Natural killer cell (primary cell): ENCODE measurements at regions of chr12 and their contacts with region 1.

Region 1: GRCh38 chr12:120580787-120581723 is at the start of gene POP5:
- DNase-seq: peak; percentile 90 to 98
- ATAC-seq: peak; percentile 92 to 98 (median 96)
- H3K4me3 ChIP-seq: peak within 1 kb of the TSS; percentile 86
- H3K4me3 Mint-ChIP-seq: peak within 1 kb of the TSS; percentile 93
- H3K27ac ChIP-seq: peak within 1 kb of the TSS; percentile 44
- H3K27ac Mint-ChIP-seq: peak within 1 kb of the TSS; percentile 88 to 94
- H3K4me1 ChIP-seq: peaks cover 32% of the 10 kb centered on the region
- H3K4me1 Mint-ChIP-seq: peaks cover 30 to 36% of the 10 kb centered on the region in 2 donors
- H3K27me3 ChIP-seq: peaks cover 3% of the 10 kb centered on the region
- H3K27me3 Mint-ChIP-seq: peaks cover 4 to 12% of the 10 kb centered on the region in 2 donors
- CTCF ChIP-seq: no peak
- total RNA-seq, gene POP5: 38.7 to 54.3 (median 42.9) TPM

Region 2: GRCh38 chr12:119788783-119789182 is 792.3 kb before region 1 on chr12:
- intact Hi-C with region 1: no loop called
- DNase-seq: no peak
- ATAC-seq: no peak
- H3K4me3 ChIP-seq: no peak overlapping the region
- H3K4me3 Mint-ChIP-seq: no peak overlapping the region
- H3K27ac ChIP-seq: no peak overlapping the region
- H3K27ac Mint-ChIP-seq: no peak overlapping the region
- H3K4me1 ChIP-seq: no peaks in the 10 kb centered on the region
- H3K4me1 Mint-ChIP-seq: no peaks in the 10 kb centered on the region
- H3K27me3 ChIP-seq: no peaks in the 10 kb centered on the region
- H3K27me3 Mint-ChIP-seq: no peaks in the 10 kb centered on the region
- CTCF ChIP-seq: no peak

Region 3: DNA sequence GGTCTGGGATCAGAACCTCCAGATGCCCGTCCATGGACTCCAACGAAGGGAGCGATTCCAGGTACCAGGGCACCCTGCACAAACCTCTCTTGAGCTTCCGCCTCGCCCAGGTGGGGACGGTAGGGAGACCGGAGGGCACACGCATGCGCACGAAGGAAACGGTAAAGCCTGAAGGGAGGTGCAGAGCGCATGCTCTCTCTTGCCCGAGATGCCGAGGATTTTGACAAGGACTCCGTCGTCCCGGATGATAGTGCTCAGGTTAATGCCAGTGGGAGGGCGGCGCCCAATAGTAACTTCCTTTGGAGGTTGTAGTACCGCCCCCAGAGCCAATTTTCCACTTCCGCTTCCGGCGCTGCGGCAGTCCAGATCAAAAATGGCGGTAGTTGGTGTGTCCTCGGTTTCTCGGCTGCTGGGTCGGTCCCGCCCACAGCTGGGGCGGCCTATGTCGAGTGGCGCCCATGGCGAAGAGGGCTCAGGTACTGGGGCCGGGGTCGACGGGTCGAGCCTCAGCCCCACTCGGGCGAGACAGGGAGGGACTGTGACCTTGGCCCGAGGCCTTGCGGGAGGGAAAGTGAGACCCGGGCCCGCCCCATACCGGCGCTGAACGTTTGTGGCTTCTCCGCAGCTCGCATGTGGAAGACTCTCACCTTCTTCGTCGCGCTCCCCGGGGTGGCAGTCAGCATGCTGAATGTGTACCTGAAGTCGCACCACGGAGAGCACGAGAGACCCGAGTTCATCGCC is 143.1 kb before region 1 on chr12 and contains the start of gene COX6A1:
- intact Hi-C with region 1: loop called (anchors 10 kb)
- DNase-seq: peak; percentile 83 to 100
- ATAC-seq: peak; percentile 87 to 94 (median 91)
- H3K4me3 ChIP-seq: peak within 1 kb of the TSS; percentile 73
- H3K4me3 Mint-ChIP-seq: peak within 1 kb of the TSS; percentile 98
- H3K27ac ChIP-seq: peak within 1 kb of the TSS; percentile 78
- H3K27ac Mint-ChIP-seq: peak within 1 kb of the TSS; percentile 91 to 94
- H3K4me1 ChIP-seq: peaks cover 20% of the 10 kb centered on the region
- H3K4me1 Mint-ChIP-seq: peaks cover 22 to 28% of the 10 kb centered on the region in 2 donors
- H3K27me3 ChIP-seq: no peaks in the 10 kb centered on the region
- H3K27me3 Mint-ChIP-seq: no peaks in the 10 kb centered on the region
- CTCF ChIP-seq: no peak
- total RNA-seq, gene COX6A1: 152 to 189 (median 163) TPM

Region 4: GRCh38 chr12:120649442-120650232 is 68.6 kb after region 1 on chr12:
- intact Hi-C with region 1: loop called (anchors 1 kb)
- DNase-seq: no peak
- ATAC-seq: no peak
- H3K4me3 ChIP-seq: no peak overlapping the region
- H3K4me3 Mint-ChIP-seq: no peak overlapping the region
- H3K27ac ChIP-seq: no peak overlapping the region
- H3K27ac Mint-ChIP-seq: no peak overlapping the region
- H3K4me1 ChIP-seq: peaks cover 11% of the 10 kb centered on the region
- H3K4me1 Mint-ChIP-seq: peaks cover 12 to 14% of the 10 kb centered on the region in 2 donors
- H3K27me3 ChIP-seq: peaks cover 8% of the 10 kb centered on the region
- H3K27me3 Mint-ChIP-seq: peaks cover 36% of the 10 kb centered on the region in 2 donors
- CTCF ChIP-seq: peak; percentile 27

Region 5: DNA sequence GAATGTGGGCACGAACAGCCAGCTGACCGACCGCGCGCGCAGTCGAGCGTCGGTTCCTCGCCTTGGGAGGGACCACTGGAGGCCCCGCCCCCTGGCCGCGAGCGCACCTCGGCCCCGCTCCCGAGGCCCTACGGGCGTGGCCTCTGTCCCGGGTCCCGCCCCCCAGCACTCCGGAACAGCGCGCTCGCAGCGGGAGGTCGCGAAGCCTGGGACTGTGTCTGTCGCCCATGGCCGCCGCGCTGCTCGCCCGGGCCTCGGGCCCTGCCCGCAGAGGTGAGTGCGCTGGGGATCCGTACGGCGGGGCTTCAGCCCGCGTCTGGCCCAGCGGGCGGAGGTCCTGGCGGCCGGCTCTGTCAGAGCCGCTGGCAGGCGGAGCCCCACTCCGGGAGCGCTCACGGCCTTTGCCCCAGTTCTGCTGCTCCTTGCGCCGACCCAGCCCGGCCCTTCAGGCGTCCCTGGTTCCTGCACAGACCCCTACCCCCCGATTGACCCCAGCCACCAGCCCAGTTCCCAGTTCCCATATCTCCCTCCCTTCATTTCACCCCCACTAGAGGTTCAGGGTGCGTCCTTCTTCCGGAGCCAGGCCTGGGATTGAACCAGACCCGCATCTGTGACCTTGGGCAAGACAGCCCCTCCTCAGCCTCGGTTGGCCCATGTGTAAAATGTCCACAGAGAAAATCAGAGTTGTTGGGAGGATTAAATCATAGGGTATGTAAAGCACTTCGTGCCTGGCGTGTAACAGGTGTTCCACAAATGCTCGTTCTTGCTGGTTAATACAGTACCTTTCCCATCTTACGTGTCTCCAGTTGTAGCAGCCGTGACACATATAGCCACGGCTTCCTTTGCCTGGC is 144.8 kb after region 1 on chr12 and contains the start of gene ACADS:
- intact Hi-C with region 1: loop called (anchors 5 kb)
- DNase-seq: peak; percentile 91 to 94
- ATAC-seq: peak; percentile 99 to 100 (median 100)
- H3K4me3 ChIP-seq: peak within 1 kb of the TSS; percentile 52
- H3K4me3 Mint-ChIP-seq: peak within 1 kb of the TSS; percentile 91
- H3K27ac ChIP-seq: peak within 1 kb of the TSS; percentile 30
- H3K27ac Mint-ChIP-seq: peak within 1 kb of the TSS; percentile 51 to 88
- H3K4me1 ChIP-seq: peaks cover 15% of the 10 kb centered on the region
- H3K4me1 Mint-ChIP-seq: peaks cover 16 to 28% of the 10 kb centered on the region in 2 donors
- H3K27me3 ChIP-seq: no peaks in the 10 kb centered on the region
- H3K27me3 Mint-ChIP-seq: no peaks in the 10 kb centered on the region
- CTCF ChIP-seq: no peak
- total RNA-seq, gene ACADS: 14.9 to 18.6 (median 15.5) TPM

Region 6: GRCh38 chr12:121060149-121061001 is 479.3 kb after region 1 on chr12:
- intact Hi-C with region 1: loop called (anchors 1 kb)
- DNase-seq: peak; percentile 53 to 86
- ATAC-seq: peak; percentile 92 to 96 (median 93)
- H3K4me3 ChIP-seq: peak overlapping the region; percentile 58
- H3K4me3 Mint-ChIP-seq: peak overlapping the region; percentile 92
- H3K27ac ChIP-seq: peak overlapping the region; percentile 98
- H3K27ac Mint-ChIP-seq: peak overlapping the region; percentile 95 to 97
- H3K4me1 ChIP-seq: peaks cover 16% of the 10 kb centered on the region
- H3K4me1 Mint-ChIP-seq: peaks cover 10% of the 10 kb centered on the region in 2 donors
- H3K27me3 ChIP-seq: no peaks in the 10 kb centered on the region
- H3K27me3 Mint-ChIP-seq: no peaks in the 10 kb centered on the region
- CTCF ChIP-seq: peak; percentile 43